ENCODE measurements at regions of chr2 and their contacts with region 1.

Region 1: GRCh38 chr2:145593832-145594614 is 1074.1 kb upstream of the ZEB2 start:
- DNase-seq: peak; percentile 87
- H3K4me3 ChIP-seq: no peak overlapping the region
- H3K27ac ChIP-seq: peak overlapping the region; percentile 82
- H3K4me1 ChIP-seq: peaks cover 51% of the 10 kb centered on the region
- H3K27me3 ChIP-seq: no peaks in the 10 kb centered on the region
- CTCF ChIP-seq: peak in 1 of 2 donors; percentile 25
- POLR2A ChIP-seq: no peak

Region 2: DNA sequence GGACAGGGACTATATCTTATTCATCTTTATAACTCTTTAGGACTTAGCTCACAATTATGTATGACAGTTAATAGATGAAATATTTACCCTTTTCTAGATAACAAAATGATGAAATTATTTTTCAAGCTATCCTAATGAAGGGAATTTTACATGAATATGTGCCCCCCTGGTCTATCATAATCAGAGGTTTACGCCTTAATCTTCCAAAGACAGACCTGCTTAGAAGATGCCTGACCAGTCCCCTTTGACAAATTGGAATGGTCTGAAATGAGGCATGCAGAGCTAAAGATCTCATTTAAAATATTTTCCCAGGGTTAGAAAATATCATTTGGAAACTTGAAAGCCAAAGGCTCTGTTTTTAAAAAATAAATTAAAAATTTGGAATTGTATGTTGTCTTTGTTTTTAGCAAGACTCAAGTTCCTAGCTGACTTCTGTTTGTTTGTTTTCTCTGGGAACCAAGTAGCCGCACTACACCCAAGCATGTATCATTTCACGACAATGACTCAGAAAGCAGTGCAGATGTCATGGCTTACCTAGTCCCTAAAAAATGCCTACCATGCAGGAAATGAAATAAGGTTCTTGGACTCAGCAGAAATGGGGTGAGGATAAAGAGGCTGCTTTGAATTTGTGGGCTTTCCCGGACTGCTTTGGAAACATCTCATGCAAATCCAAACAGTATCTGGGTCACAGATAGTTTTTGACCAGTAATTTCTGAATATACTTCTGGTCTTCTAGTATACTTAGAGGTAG is 1236.2 kb before region 1 on chr2:
- CTCF ChIA-PET with region 1: no interaction called
- POLR2A ChIA-PET with region 1: no interaction called
- dilution Hi-C with region 1: no loop called
- intact Hi-C with region 1: loop called (anchors 10 kb)
- DNase-seq: peak; percentile 92
- H3K4me3 ChIP-seq: no peak overlapping the region
- H3K27ac ChIP-seq: peak overlapping the region; percentile 82
- H3K4me1 ChIP-seq: peaks cover 15% of the 10 kb centered on the region
- H3K27me3 ChIP-seq: no peaks in the 10 kb centered on the region
- CTCF ChIP-seq: no peak
- POLR2A ChIP-seq: no peak

Region 3: DNA sequence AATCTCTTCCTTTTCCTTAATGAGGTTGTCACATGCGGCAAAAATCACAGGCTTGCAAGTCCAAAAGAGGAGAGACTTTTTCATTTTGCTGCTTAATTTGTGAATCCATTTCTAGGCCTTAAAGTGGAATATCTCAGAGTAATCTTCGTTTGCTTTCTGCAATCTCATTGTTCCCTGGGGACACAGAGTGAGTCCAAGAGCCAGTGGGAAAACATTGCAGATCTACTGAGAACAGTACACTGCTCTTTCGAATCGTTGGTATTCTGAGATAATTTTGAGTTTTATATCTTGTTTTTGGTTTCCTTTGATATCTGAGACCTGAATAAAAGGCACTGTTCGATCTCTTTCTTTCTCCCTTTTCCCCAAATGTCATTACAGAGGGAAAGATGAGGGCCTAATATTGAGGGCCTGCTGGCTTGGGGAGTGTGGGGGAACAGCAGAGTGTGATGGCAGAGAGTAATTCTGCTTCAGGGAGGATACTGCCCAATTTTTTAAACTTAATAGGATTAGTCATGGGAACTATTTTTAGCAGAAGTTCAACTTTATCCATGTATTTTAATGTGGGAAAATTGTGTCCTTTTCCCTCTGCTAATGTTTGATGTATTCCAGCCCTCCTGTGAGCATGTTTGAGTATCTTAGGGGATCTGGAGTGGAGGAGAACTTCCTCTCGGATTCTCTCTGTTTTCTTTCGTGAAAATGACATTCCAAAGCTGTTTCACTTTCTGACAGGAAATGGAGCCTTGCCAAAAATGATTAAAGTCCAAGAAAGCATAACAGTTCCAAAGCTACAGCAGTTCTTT is 655.9 kb before region 1 on chr2:
- CTCF ChIA-PET with region 1: no interaction called
- POLR2A ChIA-PET with region 1: no interaction called
- dilution Hi-C with region 1: no loop called
- intact Hi-C with region 1: loop called (anchors 2 kb)
- DNase-seq: peak; percentile 92
- H3K4me3 ChIP-seq: no peak overlapping the region
- H3K27ac ChIP-seq: peak overlapping the region; percentile 59
- H3K4me1 ChIP-seq: peaks cover 40% of the 10 kb centered on the region
- H3K27me3 ChIP-seq: no peaks in the 10 kb centered on the region
- CTCF ChIP-seq: no peak
- POLR2A ChIP-seq: no peak

Region 4: DNA sequence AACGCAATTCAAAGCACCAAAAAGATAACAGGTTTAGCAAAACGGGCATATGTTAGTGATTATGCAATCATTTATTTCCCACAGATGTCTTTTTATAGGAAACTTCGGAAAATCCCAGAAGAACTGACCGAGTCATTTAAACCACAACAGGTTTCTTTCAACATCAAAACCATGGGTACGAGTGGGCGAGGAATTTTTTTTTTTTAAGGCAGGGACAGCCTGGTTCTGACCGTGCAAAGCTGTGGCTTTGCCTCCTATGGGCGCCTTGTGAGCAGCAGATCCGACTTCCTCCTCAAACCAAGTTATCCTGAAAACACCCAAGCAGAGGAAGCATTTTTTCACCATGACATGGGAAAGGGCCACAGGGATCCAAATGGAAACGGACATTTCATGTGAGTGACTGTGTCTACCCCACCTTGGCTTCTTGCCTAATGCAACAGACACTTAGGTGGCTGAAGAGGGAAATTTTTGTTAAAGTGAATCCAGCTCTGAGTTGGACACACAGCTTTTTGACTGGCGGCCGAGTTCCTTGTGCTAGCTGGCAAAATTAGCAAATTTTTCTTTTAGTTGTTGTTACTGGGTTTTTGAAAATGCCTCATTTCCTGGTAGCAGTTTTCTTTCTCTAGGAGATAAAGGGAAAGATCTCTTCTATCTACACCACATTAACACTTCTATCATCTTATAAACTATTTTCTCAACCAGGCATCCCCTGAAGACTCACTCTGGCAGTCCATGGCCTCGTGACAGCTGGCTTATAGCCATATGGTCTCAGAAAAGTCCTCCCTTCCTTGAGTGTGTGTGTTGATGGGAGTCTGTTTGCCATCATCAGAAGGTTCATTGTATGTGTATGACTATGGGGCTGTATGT is 586.7 kb before region 1 on chr2:
- CTCF ChIA-PET with region 1: no interaction called
- POLR2A ChIA-PET with region 1: no interaction called
- dilution Hi-C with region 1: no loop called
- intact Hi-C with region 1: loop called (anchors 5 kb)
- DNase-seq: peak; percentile 91
- H3K4me3 ChIP-seq: peak overlapping the region in 1 of 3 experiments; percentile 3
- H3K27ac ChIP-seq: peak overlapping the region; percentile 80
- H3K4me1 ChIP-seq: peaks cover 38% of the 10 kb centered on the region
- H3K27me3 ChIP-seq: no peaks in the 10 kb centered on the region
- CTCF ChIP-seq: no peak
- POLR2A ChIP-seq: no peak

Region 5: GRCh38 chr2:145744541-145745386 is 150.7 kb after region 1 on chr2:
- CTCF ChIA-PET with region 1: no interaction called
- POLR2A ChIA-PET with region 1: no interaction called
- dilution Hi-C with region 1: no loop called
- intact Hi-C with region 1: loop called (anchors 2 kb)
- DNase-seq: peak; percentile 66
- H3K4me3 ChIP-seq: no peak overlapping the region
- H3K27ac ChIP-seq: peak overlapping the region; percentile 53
- H3K4me1 ChIP-seq: peaks cover 28% of the 10 kb centered on the region
- H3K27me3 ChIP-seq: no peaks in the 10 kb centered on the region
- CTCF ChIP-seq: no peak
- POLR2A ChIP-seq: no peak

Region 6: GRCh38 chr2:145811276-145812164 is 217.5 kb after region 1 on chr2:
- CTCF ChIA-PET with region 1: no interaction called
- POLR2A ChIA-PET with region 1: no interaction called
- dilution Hi-C with region 1: no loop called
- intact Hi-C with region 1: loop called (anchors 2 kb)
- DNase-seq: peak; percentile 62
- H3K4me3 ChIP-seq: peak overlapping the region in 1 of 3 experiments; percentile 41
- H3K27ac ChIP-seq: peak overlapping the region; percentile 12
- H3K4me1 ChIP-seq: peaks cover 24% of the 10 kb centered on the region
- H3K27me3 ChIP-seq: no peaks in the 10 kb centered on the region
- CTCF ChIP-seq: no peak
- POLR2A ChIP-seq: no peak

Region 7: DNA sequence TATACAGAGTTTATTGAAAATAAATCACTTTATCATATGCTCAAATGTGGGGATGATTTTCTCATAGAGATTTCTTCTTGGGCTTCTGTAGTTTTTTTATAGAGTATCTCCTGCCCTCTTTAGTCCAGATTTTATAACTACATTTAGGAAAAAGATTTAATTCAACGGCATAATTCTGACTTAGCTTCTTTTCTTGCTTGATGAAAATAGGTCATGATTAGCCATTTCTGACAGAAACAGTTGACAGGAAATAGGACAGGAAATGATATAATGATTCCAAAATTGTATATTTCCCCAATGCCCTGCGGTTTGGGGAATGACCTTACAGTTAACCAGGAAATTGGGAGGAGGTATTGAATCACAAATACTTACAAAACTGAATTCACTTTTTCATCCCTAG is 718.9 kb after region 1 on chr2:
- CTCF ChIA-PET with region 1: no interaction called
- POLR2A ChIA-PET with region 1: no interaction called
- dilution Hi-C with region 1: no loop called
- intact Hi-C with region 1: loop called (anchors 10 kb)
- DNase-seq: peak; percentile 65
- H3K4me3 ChIP-seq: no peak overlapping the region
- H3K27ac ChIP-seq: peak overlapping the region; percentile 40
- H3K4me1 ChIP-seq: peaks cover 14% of the 10 kb centered on the region
- H3K27me3 ChIP-seq: no peaks in the 10 kb centered on the region
- CTCF ChIP-seq: no peak
- POLR2A ChIP-seq: no peak

Measured in endothelial cell of umbilical vein (primary cell).